SK-N-SH (cell line): ENCODE measurements at regions of chr17 and their contacts with region 1.

Region 1: DNA sequence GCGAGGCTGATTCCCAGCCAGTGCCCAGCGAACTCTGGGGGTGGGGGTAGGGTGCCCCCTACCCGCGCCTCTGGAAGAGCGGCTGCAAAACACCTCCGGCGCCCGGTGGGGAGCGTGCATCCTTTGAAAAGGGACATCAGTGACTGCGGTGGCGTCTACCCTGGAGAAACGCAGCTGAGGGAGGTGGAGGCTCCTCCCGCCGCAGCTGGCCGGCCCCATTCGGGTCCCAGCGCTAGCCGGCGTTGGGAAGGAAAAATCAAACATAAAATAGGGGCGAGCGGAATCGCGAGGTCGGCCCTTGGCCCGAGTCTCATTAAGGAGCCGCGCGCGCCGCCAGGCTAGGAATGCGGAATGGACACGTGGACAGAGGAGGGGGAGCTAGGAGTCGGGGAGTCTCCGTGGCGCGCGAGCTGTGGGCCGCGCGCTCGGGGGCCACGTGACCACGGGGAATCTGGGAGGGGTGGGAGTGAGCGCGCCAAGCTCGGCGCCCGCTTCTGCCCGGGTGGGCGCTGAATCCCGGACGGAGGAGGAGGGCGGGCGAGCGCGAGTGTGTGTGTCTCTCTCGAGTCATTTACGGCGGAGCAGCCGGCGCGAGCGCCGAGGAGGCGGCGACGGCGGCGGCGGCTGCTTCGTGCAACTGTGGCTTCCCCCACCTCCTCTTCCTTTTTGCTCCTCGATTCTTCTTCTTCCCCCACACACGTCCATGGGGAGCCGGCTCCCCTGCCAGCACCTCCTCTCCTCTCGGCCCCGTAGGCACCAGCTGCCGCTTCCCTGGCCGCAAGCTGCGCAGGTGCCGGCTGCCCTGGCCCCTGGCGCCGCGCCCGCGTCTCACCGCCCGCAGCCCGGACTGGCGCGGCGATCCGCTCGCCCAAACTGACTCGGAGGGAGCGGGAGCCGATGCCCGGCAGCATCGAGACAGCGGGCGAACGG is at the start of gene TMEM132E:
- DNase-seq: peak; percentile 75
- H3K4me3 ChIP-seq: peak within 1 kb of the TSS; percentile 38 to 41
- H3K27ac ChIP-seq: no peak within 1 kb of the TSS
- H3K4me1 ChIP-seq: peaks cover 0 to 18% of the 10 kb centered on the region in 2 experiments; a peak in 1 of 4 replicates
- H3K27me3 ChIP-seq: peaks cover 76% of the 10 kb centered on the region
- CTCF ChIP-seq: no peak
- EP300 ChIP-seq: no peak
- RAD21 ChIP-seq: no peak
- polyA plus RNA-seq, gene TMEM132E: not detected in 2 replicates

Region 2: GRCh38 chr17:34482730-34483129 is 96.6 kb before region 1 on chr17:
- CTCF ChIA-PET with region 1: no interaction called
- POLR2A ChIA-PET with region 1: no interaction called
- DNase-seq: no peak
- H3K4me3 ChIP-seq: no peak overlapping the region
- H3K27ac ChIP-seq: no peak overlapping the region
- H3K4me1 ChIP-seq: no peaks in the 10 kb centered on the region; a peak in 1 of 4 replicates
- H3K27me3 ChIP-seq: no peaks in the 10 kb centered on the region
- CTCF ChIP-seq: no peak
- EP300 ChIP-seq: no peak
- RAD21 ChIP-seq: no peak

Region 3: GRCh38 chr17:34603974-34604373 is 24.7 kb after region 1 on chr17:
- CTCF ChIA-PET with region 1: no interaction called
- POLR2A ChIA-PET with region 1: no interaction called
- DNase-seq: no peak
- H3K4me3 ChIP-seq: no peak overlapping the region
- H3K27ac ChIP-seq: no peak overlapping the region
- H3K4me1 ChIP-seq: peaks cover 0 to 5% of the 10 kb centered on the region in 2 experiments; a peak in 1 of 4 replicates
- H3K27me3 ChIP-seq: no peaks in the 10 kb centered on the region
- CTCF ChIP-seq: no peak
- EP300 ChIP-seq: no peak
- RAD21 ChIP-seq: no peak

Region 4: DNA sequence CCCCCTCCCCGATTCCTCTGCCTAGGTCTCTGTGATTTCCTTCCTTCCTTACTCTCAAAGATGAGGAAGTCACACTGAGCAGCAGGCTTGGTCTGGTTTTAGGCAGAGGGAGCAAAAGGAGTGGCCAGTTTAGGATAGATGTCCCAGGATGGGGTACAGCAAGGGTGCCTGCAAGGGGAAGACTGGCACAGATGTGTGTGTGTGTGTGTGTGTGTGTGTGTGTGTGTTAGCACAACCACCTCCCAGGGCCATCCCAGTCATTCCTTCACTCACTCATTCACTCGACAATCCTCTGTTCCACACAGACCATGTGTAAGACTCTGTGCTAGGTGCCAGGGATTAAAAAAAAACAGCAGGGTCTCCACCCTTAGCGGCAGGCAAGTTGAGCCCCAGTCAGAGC is 36.0 kb after region 1 on chr17:
- CTCF ChIA-PET with region 1: no interaction called
- POLR2A ChIA-PET with region 1: no interaction called
- DNase-seq: no peak
- H3K4me3 ChIP-seq: no peak overlapping the region
- H3K27ac ChIP-seq: no peak overlapping the region
- H3K4me1 ChIP-seq: peaks cover 0 to 56% of the 10 kb centered on the region in 2 experiments; a peak in 2 of 4 replicates
- H3K27me3 ChIP-seq: no peaks in the 10 kb centered on the region
- CTCF ChIP-seq: no peak
- EP300 ChIP-seq: no peak
- RAD21 ChIP-seq: no peak

Region 5: DNA sequence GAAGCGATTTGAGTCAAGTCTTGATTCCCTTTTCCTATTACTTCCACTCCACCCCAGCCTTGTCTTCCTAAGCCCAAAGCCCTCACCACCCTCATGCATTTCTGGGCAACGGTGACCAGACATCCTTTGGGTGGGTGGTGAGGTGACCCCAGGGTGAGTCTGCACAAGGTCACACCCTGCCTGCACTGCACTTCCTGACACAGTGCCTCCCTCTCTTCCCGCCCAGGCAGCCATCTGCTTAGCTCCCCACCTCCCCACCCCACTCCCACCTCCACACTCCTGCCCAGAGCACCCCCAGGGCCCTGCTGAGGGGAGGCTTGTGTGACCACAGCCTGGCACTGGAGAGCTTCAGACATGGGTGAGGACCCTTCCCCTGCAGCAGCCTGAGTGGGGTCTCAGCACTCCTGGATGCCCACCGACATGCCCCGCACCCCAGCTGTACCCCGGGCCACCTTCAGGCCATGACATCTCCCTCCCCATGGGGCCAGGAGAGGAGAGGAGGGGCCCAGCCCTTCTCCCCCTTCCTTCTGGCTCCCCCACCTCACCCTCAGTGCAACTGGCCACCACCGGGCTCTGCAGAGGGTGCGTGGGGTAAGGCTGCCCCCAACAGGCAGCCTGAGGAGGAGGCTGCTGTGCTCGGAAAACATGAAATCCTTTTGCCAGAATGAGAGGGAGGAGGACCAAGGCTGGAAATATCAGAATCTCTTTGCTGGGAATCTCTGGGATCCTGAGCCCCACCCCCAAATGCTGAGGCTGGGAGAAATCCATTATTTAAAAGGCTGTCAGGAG is 313.4 kb after region 1 on chr17:
- CTCF ChIA-PET with region 1: interaction called, 45 read pairs
- POLR2A ChIA-PET with region 1: no interaction called
- DNase-seq: peak; percentile 86
- H3K4me3 ChIP-seq: peak overlapping the region in 1 of 2 experiments; percentile 51; a peak in 1 of 4 replicates
- H3K27ac ChIP-seq: no peak overlapping the region
- H3K4me1 ChIP-seq: no peaks in the 10 kb centered on the region
- H3K27me3 ChIP-seq: no peaks in the 10 kb centered on the region
- CTCF ChIP-seq: peak; percentile 50
- EP300 ChIP-seq: no peak
- RAD21 ChIP-seq: peak; percentile 91